ENCODE measurements at regions of chr6 and their contacts with region 1.

Region 1: DNA sequence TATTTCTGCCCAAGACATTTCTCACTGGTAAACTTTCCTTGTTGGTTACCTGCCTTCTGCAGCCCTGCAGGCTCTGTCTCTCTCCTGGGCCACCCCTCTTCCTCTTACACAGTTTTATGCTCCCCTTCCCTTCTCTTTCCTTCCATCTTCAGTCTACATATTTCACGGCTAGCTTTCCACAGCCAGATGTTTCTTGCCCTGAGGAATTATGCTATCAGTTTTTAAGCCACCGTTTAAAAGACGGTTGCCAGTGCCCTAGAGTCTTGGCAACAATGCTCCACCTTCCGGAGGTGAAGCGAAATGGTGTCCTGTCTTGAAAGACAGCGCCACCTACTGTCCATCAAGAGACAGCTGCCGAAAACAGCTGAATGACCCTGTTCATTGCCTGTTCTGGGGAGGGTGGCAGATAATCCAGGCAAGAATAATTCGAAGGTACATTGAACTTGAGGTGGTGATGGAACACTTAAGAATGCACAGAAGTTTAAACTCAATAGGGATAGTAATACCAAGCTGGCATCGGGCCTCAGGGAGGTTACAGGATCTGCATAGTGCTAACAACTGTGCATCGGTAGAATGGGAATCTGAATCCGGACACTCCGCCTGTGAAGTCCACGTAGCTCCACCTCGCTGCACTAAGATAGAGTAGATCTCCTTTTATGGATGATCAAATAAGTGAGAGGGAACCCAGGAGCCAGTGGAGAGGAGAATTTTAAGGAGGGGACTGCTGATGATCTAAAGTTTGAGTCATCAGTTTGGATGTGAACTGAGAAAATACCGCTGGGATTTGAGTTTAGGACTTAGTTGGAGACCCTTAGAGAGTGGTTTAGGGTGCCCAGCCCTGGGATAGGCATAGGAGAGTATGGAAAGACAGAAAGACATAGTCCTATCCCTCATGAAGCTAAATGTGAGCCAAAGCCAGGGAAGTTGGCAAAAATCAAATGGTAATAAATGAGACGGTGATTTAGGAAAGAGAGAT is 4.8 kb upstream of the TRIM40 start:
- DNase-seq: peak; percentile 91
- H3K4me3 Mint-ChIP-seq: peak overlapping the region; percentile 2
- H3K27ac Mint-ChIP-seq: no peak overlapping the region
- H3K4me1 Mint-ChIP-seq: peaks cover 19% of the 10 kb centered on the region
- H3K27me3 Mint-ChIP-seq: peaks cover 60% of the 10 kb centered on the region

Region 2: DNA sequence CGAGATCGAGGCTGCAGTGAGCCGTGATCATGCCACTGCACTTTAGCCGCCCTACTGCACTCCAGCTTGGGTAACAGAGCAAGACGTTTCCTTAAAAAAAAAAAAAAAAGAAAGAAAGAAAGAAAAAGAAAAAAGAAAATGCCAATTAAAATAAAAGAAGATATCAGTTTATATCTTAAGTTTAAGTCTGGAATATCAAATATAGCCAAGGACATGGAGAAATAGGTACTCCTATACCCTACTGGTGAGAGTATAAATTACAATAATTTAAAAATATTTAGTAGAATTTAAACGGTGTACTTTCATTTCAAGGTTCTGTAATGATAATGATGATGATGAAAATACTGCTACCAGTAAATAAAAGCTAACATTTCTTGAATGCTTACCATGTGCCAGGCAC is 14.5 kb before region 1 on chr6:
- intact Hi-C with region 1: no loop called
- DNase-seq: no peak
- H3K4me3 Mint-ChIP-seq: no peak overlapping the region
- H3K27ac Mint-ChIP-seq: no peak overlapping the region
- H3K4me1 Mint-ChIP-seq: peaks cover 10% of the 10 kb centered on the region
- H3K27me3 Mint-ChIP-seq: peaks cover 55% of the 10 kb centered on the region

Region 3: GRCh38 chr6:30169658-30170614 is 38.8 kb after region 1 on chr6:
- intact Hi-C with region 1: loop called (anchors 1 kb)
- DNase-seq: peak; percentile 81
- H3K4me3 Mint-ChIP-seq: no peak overlapping the region
- H3K27ac Mint-ChIP-seq: no peak overlapping the region
- H3K4me1 Mint-ChIP-seq: peaks cover 29% of the 10 kb centered on the region
- H3K27me3 Mint-ChIP-seq: peaks cover 30% of the 10 kb centered on the region